CD8-positive, alpha-beta T cell (primary cell): ENCODE measurements at regions of chr11 and their contacts with region 1.

Region 1: DNA sequence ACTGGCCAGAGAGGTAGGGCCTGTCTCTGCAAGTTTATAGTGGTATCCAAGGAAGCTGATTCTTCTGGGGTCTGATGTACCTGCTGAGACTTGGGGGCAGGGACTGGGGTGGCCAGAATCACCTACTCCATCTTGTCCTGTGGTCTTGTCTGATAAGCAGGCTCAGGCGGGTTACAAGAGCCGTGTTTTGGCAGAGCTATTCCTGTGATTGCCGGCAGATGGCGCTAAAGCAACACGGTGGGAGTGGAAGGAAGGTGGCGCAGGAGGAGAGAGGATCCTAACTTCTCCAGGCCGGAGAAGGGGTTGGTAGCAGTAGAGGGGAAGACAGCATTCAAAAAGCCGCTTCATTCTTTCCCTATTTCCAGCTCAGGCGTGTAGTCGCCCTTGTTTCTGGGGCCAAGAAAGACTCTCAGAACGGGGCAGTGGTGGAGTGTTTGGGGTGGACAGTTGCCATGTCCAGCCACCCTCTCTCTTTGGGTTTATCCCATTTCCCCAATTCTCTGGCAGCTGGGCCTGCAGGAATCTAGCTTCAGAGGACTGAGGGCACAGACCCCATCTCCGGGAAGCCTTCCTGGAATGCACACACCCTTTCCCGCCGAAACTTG is 15.1 kb downstream of the CHRM1 start:
- DNase-seq: peak; percentile 61 to 88 (median 81)
- ATAC-seq: peak; percentile 77
- H3K4me3 ChIP-seq: no peak overlapping the region
- H3K4me3 Mint-ChIP-seq: no peak overlapping the region
- H3K27ac ChIP-seq: no peak overlapping the region
- H3K27ac Mint-ChIP-seq: no peak overlapping the region
- H3K4me1 ChIP-seq: no peaks in the 10 kb centered on the region
- H3K4me1 Mint-ChIP-seq: peaks cover 1% of the 10 kb centered on the region
- H3K27me3 ChIP-seq: no peaks in the 10 kb centered on the region
- H3K27me3 Mint-ChIP-seq: peaks cover 7% of the 10 kb centered on the region
- CTCF ChIP-seq: peak; percentile 96

Region 2: GRCh38 chr11:62652161-62653006 is 253.6 kb before region 1 on chr11:
- CTCF ChIA-PET with region 1: no interaction called
- POLR2A ChIA-PET with region 1: no interaction called
- intact Hi-C with region 1: no loop called
- DNase-seq: peak in 3 of 9 experiments; percentile 26 to 50 (median 46)
- ATAC-seq: peak; percentile 10
- H3K4me3 ChIP-seq: peak overlapping the region; percentile 84 to 90
- H3K4me3 Mint-ChIP-seq: peak overlapping the region; percentile 91
- H3K27ac ChIP-seq: peak overlapping the region; percentile 81 to 91
- H3K27ac Mint-ChIP-seq: peak overlapping the region; percentile 94
- H3K4me1 ChIP-seq: peaks cover 14% of the 10 kb centered on the region
- H3K4me1 Mint-ChIP-seq: peaks cover 18% of the 10 kb centered on the region
- H3K27me3 ChIP-seq: no peaks in the 10 kb centered on the region
- H3K27me3 Mint-ChIP-seq: no peaks in the 10 kb centered on the region
- CTCF ChIP-seq: no peak

Region 3: DNA sequence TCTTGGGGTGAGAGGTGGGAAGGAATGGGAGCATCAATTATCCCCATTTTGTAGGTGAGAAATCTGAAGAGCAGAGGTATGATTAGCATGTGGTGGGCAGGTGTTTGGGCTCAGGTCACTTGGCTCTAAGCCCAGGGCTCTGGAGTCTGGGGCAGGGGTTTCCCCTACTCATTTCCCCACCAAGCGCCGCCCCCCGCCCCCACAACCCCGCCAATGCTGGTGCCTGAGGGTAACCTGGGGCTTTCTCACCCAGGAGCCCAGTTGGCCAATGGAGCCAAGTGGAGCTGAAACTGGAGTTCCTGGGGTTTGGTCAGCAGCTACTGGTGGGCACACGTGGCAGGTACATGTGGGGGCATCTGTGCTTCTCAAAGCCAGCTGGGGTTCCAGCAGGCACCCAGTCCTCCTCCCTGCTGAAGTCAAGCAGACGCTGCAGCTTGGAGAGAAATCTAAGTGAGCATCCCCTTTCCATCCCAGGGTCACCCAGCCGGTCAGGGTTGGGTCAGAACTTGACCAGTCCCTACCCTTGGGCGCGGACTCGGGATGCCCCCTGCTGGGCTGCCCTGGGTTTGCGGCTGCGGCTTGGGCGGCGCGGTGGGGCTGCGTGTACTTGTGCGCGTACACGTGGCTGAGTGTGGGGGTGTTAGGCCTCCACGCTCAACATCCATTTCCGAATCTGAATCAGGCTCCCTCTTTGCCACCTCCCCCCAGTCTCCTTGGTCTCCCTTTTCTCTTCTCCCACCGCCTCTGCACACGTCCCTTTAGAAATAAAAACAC is 16.8 kb after region 1 on chr11:
- CTCF ChIA-PET with region 1: interaction called, 45 read pairs
- POLR2A ChIA-PET with region 1: no interaction called
- intact Hi-C with region 1: no loop called
- DNase-seq: peak in 3 of 9 experiments; percentile 13 to 29 (median 25)
- ATAC-seq: peak; percentile 19
- H3K4me3 ChIP-seq: no peak overlapping the region
- H3K4me3 Mint-ChIP-seq: peak overlapping the region; percentile 71
- H3K27ac ChIP-seq: no peak overlapping the region
- H3K27ac Mint-ChIP-seq: no peak overlapping the region
- H3K4me1 ChIP-seq: peaks cover 36% of the 10 kb centered on the region
- H3K4me1 Mint-ChIP-seq: peaks cover 25% of the 10 kb centered on the region
- H3K27me3 ChIP-seq: peaks cover 36 to 40% of the 10 kb centered on the region in 2 experiments
- H3K27me3 Mint-ChIP-seq: peaks cover 39% of the 10 kb centered on the region
- CTCF ChIP-seq: no peak

Region 4: GRCh38 chr11:62985041-62985750 is 79.2 kb after region 1 on chr11:
- CTCF ChIA-PET with region 1: interaction called, 10 read pairs
- POLR2A ChIA-PET with region 1: no interaction called
- intact Hi-C with region 1: no loop called
- DNase-seq: no peak
- ATAC-seq: no peak
- H3K4me3 ChIP-seq: no peak overlapping the region
- H3K4me3 Mint-ChIP-seq: no peak overlapping the region
- H3K27ac ChIP-seq: no peak overlapping the region
- H3K27ac Mint-ChIP-seq: no peak overlapping the region
- H3K4me1 ChIP-seq: no peaks in the 10 kb centered on the region
- H3K4me1 Mint-ChIP-seq: no peaks in the 10 kb centered on the region
- H3K27me3 ChIP-seq: peaks cover 0 to 2% of the 10 kb centered on the region in 2 experiments
- H3K27me3 Mint-ChIP-seq: peaks cover 7% of the 10 kb centered on the region
- CTCF ChIP-seq: no peak

Region 5: GRCh38 chr11:63023841-63024648 is 118.0 kb after region 1 on chr11:
- CTCF ChIA-PET with region 1: interaction called, 282 read pairs
- POLR2A ChIA-PET with region 1: no interaction called
- intact Hi-C with region 1: loop called in 1 of 2 experiments (anchors 1 kb)
- DNase-seq: peak; percentile 68 to 91 (median 80)
- ATAC-seq: peak; percentile 99
- H3K4me3 ChIP-seq: no peak overlapping the region
- H3K4me3 Mint-ChIP-seq: no peak overlapping the region
- H3K27ac ChIP-seq: no peak overlapping the region
- H3K27ac Mint-ChIP-seq: no peak overlapping the region
- H3K4me1 ChIP-seq: no peaks in the 10 kb centered on the region
- H3K4me1 Mint-ChIP-seq: peaks cover 4% of the 10 kb centered on the region
- H3K27me3 ChIP-seq: peaks cover 0 to 2% of the 10 kb centered on the region in 2 experiments
- H3K27me3 Mint-ChIP-seq: peaks cover 38% of the 10 kb centered on the region
- CTCF ChIP-seq: peak; percentile 100

Region 6: GRCh38 chr11:63417174-63417852 is 511.3 kb after region 1 on chr11:
- CTCF ChIA-PET with region 1: no interaction called
- POLR2A ChIA-PET with region 1: no interaction called
- intact Hi-C with region 1: no loop called
- DNase-seq: no peak
- ATAC-seq: no peak
- H3K4me3 ChIP-seq: no peak overlapping the region
- H3K4me3 Mint-ChIP-seq: no peak overlapping the region
- H3K27ac ChIP-seq: no peak overlapping the region
- H3K27ac Mint-ChIP-seq: no peak overlapping the region
- H3K4me1 ChIP-seq: peaks cover 7% of the 10 kb centered on the region
- H3K4me1 Mint-ChIP-seq: peaks cover 19% of the 10 kb centered on the region
- H3K27me3 ChIP-seq: no peaks in the 10 kb centered on the region
- H3K27me3 Mint-ChIP-seq: peaks cover 2% of the 10 kb centered on the region
- CTCF ChIP-seq: no peak

Region 7: GRCh38 chr11:63635762-63636465 is 729.9 kb after region 1 on chr11:
- CTCF ChIA-PET with region 1: no interaction called
- POLR2A ChIA-PET with region 1: no interaction called
- intact Hi-C with region 1: loop called in 1 of 2 experiments (anchors 5 kb)
- DNase-seq: peak; percentile 60 to 82 (median 75)
- ATAC-seq: peak; percentile 89
- H3K4me3 ChIP-seq: no peak overlapping the region
- H3K4me3 Mint-ChIP-seq: no peak overlapping the region
- H3K27ac ChIP-seq: no peak overlapping the region
- H3K27ac Mint-ChIP-seq: no peak overlapping the region
- H3K4me1 ChIP-seq: no peaks in the 10 kb centered on the region
- H3K4me1 Mint-ChIP-seq: peaks cover 8% of the 10 kb centered on the region
- H3K27me3 ChIP-seq: no peaks in the 10 kb centered on the region
- H3K27me3 Mint-ChIP-seq: no peaks in the 10 kb centered on the region
- CTCF ChIP-seq: peak; percentile 93

Region 8: DNA sequence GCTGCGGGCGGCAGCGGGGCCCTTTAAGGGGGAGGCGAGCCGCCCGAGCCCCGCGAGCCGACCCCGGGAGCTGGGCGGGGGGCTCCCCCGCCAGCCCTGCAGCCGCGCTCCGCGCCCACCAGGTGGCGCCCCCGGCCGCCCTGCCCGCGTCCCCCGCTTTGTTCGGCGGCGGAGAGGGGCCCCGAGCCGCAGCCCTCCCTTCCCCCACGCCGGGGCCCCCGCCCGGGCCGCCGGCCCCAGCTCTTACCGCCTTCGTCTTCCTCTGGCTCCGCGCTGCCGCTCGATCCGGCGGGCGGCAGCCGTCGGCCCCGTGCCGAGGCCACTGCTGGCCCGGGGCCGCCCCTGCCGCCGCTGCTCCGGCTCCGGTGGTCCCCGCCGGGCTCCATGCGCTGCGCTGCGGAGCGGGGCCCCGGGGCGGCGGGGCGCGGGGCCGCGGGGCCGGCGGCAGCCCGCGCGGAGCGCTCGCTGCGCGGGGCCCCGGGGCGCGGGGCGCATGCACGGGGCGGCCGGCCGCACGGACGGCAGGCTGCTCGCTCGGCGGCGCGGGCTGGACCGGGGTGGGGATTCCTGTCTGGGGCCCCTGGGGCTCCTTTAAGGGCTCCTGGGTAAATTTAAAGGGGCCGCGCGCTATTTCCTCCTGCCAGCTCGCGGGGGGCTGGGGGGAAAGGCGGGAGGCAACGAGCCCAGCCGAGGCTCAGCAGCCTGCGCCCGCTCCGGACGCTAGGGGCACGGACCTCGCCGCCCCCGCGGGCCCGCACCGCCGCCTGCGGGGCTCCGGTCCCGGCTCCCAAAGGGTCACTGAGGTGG is 862.4 kb after region 1 on chr11 and contains the start of gene ZFTA:
- CTCF ChIA-PET with region 1: no interaction called
- POLR2A ChIA-PET with region 1: no interaction called
- intact Hi-C with region 1: no loop called
- DNase-seq: peak; percentile 33 to 81 (median 64)
- ATAC-seq: peak; percentile 76
- H3K4me3 ChIP-seq: peak within 1 kb of the TSS; percentile 69 to 85
- H3K4me3 Mint-ChIP-seq: peak within 1 kb of the TSS; percentile 94
- H3K27ac ChIP-seq: peak within 1 kb of the TSS in 1 of 2 experiments; percentile 13
- H3K27ac Mint-ChIP-seq: peak within 1 kb of the TSS; percentile 86
- H3K4me1 ChIP-seq: peaks cover 15% of the 10 kb centered on the region
- H3K4me1 Mint-ChIP-seq: peaks cover 16% of the 10 kb centered on the region
- H3K27me3 ChIP-seq: peaks cover 0 to 3% of the 10 kb centered on the region in 2 experiments
- H3K27me3 Mint-ChIP-seq: no peaks in the 10 kb centered on the region
- CTCF ChIP-seq: peak; percentile 52
- total RNA-seq, gene ZFTA: 3.2 to 5.7 TPM